Dorsolateral prefrontal cortex (tissue), 120 donors: ENCODE measurements at regions of chr6 and their contacts with region 1.

Region 1: DNA sequence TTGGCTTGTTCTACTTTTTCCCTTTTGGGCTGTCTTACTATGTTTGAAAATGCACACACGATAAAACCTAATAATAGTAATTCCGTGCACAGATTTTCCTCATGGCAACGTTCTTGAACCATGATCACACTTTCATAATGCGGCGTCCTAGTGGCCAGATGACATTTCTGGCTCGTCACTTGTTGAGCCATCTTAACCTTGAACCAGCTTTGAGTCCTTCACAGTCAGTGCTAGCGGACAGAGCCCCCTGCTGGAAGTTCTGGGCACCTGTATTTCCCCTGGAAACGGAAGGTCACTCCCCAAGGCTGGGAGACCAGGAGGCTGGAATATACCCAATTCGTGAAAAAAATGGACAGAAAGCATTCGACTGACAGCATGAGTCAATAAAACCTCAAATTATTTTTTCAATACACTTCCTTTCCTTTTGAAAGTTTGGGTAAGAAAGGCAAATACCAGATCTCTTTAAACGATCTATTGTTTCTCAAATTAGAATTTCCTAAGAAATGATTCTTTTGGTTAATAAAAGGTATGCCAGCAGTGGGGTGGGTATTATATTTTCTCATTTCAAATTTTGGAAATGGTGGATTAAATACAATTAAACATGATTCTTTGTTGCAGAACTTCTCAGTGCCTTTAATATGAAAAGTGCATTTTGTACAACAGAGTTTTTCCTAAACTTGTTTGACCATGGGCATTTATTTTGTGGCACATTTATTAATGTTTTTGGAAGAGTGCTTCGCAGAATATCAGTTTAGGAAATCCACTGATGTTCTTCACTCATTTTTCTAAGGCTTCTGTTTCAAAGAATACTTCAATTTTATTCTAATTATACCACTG is 542.3 kb downstream of the QKI start:
- DNase-seq: peak; percentile 25 to 83 (median 74)
- H3K4me3 ChIP-seq: peak overlapping the region in 18 of 59 donors; percentile 1 to 45 (median 20)
- H3K27ac ChIP-seq: peak overlapping the region in 9 of 59 donors; percentile 0 to 35 (median 14)
- H3K27me3 ChIP-seq: no peaks in the 10 kb centered on the region
- CTCF ChIP-seq: peak; percentile 52 to 96 (median 89)

Region 2: DNA sequence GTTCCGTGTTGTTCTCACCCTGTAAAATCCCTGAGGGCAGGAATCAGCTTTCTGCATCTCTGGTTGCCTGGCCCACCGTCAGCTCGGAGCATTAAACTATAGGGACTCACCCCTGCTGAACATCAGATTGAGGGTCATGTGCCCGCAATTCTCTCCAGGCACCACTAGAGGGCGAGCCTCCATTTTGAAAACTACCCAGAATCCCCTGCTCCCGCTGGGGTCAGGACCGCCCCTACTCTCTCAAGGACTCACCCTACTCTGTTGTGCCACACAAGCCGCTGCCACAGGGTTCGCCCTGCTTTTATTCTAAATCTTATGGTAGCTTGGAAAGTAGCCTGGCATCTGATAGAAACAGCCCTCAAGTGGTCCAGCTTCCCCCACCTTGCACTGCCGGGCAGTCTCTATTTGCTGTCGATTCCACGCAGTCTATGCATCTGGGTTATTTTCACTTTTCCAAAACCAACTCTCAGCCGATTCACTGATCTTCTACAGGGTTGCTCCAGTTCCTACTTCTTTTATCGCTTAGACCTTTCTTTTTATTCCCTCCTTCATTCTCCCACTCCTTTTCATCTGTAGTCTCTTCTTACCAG is 786.4 kb before region 1 on chr6:
- intact Hi-C with region 1: loop called in 1 of 2 experiments (anchors 10 kb)
- DNase-seq: no peak
- H3K4me3 ChIP-seq: no peak overlapping the region
- H3K27ac ChIP-seq: peak overlapping the region in 34 of 59 donors; percentile 1 to 100 (median 68)
- H3K27me3 ChIP-seq: no peaks in the 10 kb centered on the region
- CTCF ChIP-seq: peak in 55 of 56 donors; percentile 9 to 66 (median 47)

Region 3: DNA sequence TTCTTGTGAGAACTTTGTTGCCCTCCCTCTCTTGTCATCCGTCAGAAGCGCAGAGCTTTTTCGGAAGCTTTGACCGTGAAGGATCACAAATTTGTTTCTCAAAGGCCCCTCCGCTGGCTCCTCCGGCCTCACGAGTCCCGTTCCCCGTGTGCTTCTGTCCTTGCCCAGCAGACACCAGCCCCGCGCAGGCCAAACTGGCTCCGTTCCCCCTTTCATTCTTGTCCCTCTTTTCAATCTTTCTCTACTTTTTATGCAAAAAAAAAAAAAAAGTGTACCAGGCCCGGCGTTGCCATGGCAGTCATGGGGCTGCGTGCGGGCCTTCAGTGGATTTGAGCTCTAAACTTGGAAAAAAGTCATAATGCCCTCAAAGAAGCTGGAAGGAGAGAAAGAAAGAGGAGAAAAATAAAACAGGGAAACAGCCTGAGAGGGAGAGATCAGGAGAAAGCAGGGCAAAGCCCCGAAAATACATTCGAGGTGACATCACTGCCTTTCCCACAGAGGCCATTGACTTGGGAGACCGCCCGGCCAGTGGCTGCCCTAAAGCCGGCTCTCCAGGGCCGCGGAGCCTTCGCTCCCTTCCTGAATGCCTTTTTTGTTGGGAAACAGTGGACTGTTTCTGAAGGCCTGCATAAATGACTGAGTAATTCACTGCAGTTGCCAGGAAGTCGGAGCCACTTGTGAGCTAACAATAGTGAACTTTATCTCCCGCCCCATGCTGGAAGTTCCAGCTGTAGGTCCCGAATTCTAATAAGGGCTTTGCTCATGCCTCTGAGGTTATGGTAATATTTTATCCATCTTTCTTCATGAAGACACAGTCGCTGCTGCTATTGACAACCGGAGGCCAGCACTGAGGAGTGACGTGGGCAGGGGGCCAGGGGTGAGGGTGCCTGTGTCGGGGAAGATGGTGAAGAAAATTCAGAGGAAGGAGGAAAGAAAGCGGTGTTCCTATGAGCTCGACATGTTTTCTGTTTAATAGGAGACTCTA is 128.6 kb after region 1 on chr6:
- intact Hi-C with region 1: loop called in 1 of 2 experiments (anchors 2 kb)
- DNase-seq: peak; percentile 21 to 95 (median 93)
- H3K4me3 ChIP-seq: peak overlapping the region in 57 of 59 donors; percentile 7 to 64 (median 44)
- H3K27ac ChIP-seq: peak overlapping the region in 58 of 59 donors; percentile 1 to 90 (median 76)
- H3K27me3 ChIP-seq: peaks cover 0 to 5% (median 0%) of the 10 kb centered on the region in 45 donors
- CTCF ChIP-seq: peak in 16 of 56 donors; percentile 7 to 36 (median 20)